ENCODE measurements at regions of chrX and their contacts with region 1.

Region 1: DNA sequence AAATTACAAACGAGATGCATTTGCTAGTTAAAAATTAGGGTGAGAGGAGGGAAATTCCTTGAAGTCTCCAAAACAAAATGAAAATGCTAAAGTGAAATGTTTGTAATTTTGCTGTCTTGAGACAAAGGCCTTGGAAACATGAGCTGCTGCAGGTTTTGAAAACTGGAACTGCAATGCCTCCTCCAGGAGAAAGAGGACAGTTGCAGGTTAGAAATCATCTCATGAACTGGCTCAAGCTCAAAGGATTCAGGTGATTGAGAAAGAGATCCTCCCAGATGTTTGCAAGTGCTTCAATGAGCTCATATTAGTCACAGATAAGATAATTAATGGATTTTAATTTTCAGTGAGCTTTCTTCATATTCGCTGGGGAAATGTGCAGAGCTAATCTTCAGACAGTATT is 32.4 kb downstream of the SMPX start:
- DNase-seq: peak; percentile 46
- H3K4me3 ChIP-seq: no peak overlapping the region
- H3K27ac ChIP-seq: no peak overlapping the region
- H3K4me1 ChIP-seq: no peaks in the 10 kb centered on the region
- H3K27me3 ChIP-seq: no peaks in the 10 kb centered on the region
- CTCF ChIP-seq: peak; percentile 48 to 63

Region 2: DNA sequence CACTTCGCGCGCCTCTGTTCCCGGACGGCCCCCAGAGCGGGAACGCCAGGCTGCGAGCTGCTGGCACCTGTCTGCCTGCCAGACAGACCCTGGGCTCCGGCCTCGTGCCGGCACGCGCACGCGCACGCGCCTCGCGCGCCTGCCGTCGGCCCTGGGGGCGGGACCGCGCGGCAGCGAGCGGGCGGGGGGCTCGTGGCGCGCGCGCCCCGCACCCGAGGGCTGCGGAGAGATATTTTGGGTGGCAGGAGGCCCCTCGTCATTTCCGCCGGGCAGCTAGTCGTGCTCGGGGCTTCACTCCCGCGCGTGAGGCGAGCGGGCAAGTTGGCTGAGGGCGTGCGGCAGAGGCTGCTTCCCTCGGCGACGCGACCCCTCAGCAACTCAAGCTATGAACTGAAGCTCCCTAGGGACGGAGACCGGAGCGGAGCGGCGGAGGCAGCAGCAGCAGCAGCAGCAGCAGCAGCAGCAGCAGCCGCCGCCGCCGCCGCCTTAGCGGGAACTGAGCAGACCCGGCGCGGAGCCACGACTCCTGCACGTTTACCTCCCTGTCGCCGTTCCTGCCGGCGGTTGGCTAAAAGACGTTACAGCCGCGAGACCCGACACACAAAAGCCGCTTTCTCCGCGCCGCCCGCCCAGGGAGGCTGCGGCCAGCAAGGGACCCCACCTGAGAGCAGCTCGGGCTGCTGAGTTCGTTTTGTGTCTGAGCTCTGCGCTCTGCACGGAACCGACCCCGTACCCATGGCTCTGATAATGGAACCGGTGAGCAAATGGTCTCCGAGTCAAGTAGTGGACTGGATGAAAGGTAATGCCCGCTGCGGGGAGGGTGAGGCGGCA is 351.1 kb before region 1 on chrX and contains the start of gene CNKSR2:
- CTCF ChIA-PET with region 1: no interaction called
- dilution Hi-C with region 1: no loop called
- in situ Hi-C with region 1: no loop called
- intact Hi-C with region 1: loop called (anchors 5 kb)
- DNase-seq: peak; percentile 26
- H3K4me3 ChIP-seq: peak within 1 kb of the TSS; percentile 52 to 60 (median 58)
- H3K27ac ChIP-seq: no peak within 1 kb of the TSS
- H3K4me1 ChIP-seq: no peaks in the 10 kb centered on the region
- H3K27me3 ChIP-seq: no peaks in the 10 kb centered on the region
- CTCF ChIP-seq: no peak
- total RNA-seq, gene CNKSR2: 1.7 to 2.7 TPM

Region 3: DNA sequence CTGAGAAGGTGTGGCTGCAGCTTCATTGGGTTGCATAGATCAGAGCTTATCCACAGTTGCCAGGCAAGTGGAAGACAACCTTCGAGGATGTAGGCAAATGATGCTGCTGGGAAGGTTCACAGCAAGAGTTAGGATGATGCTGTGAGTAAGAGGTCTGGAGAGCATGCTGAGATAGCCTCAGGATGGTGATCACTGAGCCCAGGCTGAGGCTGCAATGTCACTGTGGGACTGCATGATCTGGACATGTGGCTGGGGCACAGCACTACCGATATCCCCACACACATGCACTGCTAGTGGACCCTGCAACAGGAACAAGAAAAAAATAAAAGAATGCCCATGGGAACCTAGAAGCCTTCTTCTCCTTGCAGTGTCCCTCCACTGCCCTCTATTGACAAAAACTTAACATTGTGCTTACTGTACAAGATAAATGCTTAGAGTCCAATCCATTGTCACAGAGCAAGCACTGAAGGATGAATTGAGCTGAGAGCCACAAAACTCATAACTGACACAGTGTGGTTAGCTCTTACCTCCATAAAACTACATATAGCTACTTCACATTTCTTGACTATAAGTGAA is 245.7 kb before region 1 on chrX:
- CTCF ChIA-PET with region 1: interaction called, 5 read pairs
- dilution Hi-C with region 1: no loop called
- in situ Hi-C with region 1: no loop called
- intact Hi-C with region 1: loop called (anchors 2 kb)
- DNase-seq: peak; percentile 30
- H3K4me3 ChIP-seq: no peak overlapping the region
- H3K27ac ChIP-seq: no peak overlapping the region
- H3K4me1 ChIP-seq: no peaks in the 10 kb centered on the region
- H3K27me3 ChIP-seq: no peaks in the 10 kb centered on the region
- CTCF ChIP-seq: peak; percentile 69 to 78